ENCODE measurements at regions of chr2 and their contacts with region 1.

Region 1: DNA sequence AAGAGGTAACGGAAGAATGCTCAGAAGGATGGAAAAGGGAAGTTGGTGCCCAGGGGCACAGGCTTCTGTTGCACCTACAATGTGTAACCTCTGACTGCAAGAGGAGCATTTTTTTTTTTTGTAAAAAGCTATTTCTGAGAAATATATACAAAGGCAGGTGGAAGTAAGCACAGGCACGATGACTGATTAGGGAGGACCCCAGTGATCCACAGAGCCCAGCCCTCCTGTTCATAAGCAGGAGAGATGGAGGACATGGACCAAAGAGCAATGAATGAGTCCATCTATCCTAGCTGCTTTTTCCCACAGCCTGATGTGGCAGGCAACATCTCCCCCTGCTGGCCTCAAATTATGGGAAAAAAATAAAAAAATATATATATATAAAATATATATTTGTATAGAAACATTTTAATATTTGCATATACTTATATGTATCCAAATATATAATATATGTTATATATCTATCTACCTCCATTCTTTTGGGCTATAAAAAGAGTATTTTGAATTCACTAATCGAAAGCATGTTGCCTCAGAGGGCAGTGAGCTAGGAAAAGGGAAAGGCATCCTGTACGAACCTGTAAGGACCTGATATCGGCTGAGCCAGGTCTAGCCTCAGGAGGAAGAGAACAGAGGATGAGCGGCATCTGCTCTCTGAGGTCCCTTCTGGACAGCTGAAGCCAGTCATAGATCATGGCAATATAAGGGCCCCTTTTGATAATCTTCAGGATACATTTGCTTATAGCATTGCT is 166.0 kb upstream of the STK17B start:
- DNase-seq: peak; percentile 21 to 29
- ATAC-seq: peak in 1 of 2 experiments; percentile 67; a peak in 3 of 6 replicates
- H3K4me3 ChIP-seq: no peak overlapping the region
- H3K27ac ChIP-seq: no peak overlapping the region
- H3K4me1 ChIP-seq: peaks cover 23% of the 10 kb centered on the region
- CTCF ChIP-seq: peak; percentile 76
- EP300 ChIP-seq: no peak
- POLR2A ChIP-seq: no peak
- RAD21 ChIP-seq: peak; percentile 76 to 84

Region 2: DNA sequence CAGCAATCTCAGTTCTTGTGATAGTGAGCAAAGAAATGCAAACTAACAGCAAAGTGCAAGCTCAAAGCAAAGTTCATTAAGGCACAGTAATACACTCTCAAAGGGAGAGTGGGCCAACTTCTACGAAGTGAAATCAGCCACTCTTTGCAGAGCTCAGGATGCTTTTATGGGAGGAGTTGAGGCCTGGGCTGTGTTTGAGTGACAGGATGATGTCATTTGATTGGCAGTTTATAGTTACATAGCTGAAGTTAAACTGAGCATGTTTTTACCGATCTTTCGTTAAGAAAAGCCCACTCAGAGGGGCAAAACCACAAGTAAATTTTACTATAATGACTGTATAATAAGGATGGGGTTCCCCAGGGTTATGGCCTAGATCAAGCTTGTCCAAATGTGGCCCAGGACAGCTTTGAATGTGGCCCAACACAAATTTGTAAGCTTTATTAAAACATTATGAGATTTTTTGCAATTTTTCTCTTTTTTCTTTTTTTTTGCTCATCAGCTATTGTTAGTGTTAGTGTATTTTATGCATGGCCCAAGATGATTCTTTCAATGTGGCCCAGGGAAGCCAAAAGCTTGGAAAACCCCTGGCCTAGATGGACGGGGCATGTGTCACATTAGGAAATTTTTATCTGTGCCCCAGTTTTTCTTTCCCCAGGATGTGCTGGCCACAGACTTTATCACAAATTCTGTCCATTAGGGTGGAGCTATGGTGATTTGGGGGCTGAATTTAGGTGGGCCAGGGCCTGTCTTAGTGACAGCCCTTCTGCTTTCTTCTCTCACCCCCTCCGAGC is 260.4 kb before region 1 on chr2:
- CTCF ChIA-PET with region 1: interaction called, 73 read pairs
- POLR2A ChIA-PET with region 1: no interaction called
- DNase-seq: no peak
- ATAC-seq: no peak
- H3K4me3 ChIP-seq: no peak overlapping the region
- H3K27ac ChIP-seq: no peak overlapping the region
- H3K4me1 ChIP-seq: no peaks in the 10 kb centered on the region; the same call in 2 of the 3 replicates
- CTCF ChIP-seq: no peak
- EP300 ChIP-seq: no peak
- POLR2A ChIP-seq: no peak
- RAD21 ChIP-seq: no peak

Region 3: DNA sequence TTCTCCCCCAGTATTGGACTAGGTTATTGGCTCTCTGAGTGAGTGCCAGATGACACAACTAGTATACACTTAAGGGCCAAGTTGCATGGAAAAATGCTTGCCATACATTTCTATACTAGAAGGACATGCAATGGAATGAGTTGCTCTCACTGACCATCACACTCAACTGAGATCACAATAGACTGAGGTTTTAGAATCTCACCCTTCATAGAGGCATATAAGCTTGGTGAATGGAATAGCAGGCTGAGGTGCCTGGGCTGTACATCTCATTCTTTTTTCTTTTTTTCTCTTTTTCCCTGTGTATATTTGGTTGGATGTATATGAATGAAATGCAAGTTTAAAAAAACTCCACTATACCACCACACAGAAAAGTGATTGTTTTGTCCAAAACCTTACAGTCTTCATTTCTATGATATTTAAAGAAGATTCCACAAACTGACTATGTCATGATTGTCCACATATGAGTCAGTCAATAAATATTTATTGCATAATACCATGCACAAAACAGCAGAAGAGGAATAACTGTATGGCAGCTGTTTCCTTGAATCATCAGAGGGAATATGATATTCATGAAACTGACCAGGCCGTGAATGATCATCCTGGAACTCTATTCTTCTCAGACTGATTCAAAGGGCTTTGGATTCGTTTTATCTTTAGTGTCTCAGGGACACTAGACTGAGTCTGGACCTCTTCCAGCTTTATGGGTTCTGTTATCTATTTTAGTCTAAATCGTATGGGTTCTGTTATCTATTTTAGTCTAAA is 43.4 kb before region 1 on chr2:
- CTCF ChIA-PET with region 1: interaction called, 19 read pairs
- POLR2A ChIA-PET with region 1: no interaction called
- DNase-seq: peak; percentile 28 to 63
- ATAC-seq: peak; percentile 88 to 90
- H3K4me3 ChIP-seq: no peak overlapping the region
- H3K27ac ChIP-seq: peak overlapping the region; percentile 61 to 74
- H3K4me1 ChIP-seq: peaks cover 28% of the 10 kb centered on the region
- CTCF ChIP-seq: no peak
- EP300 ChIP-seq: peak in 1 of 2 experiments; percentile 55; a peak in 1 of 5 replicates
- POLR2A ChIP-seq: no peak
- RAD21 ChIP-seq: 0 out of 5 replicates have a peak, but pooled peaks of 1 of the 2 experiments have one; percentile 29

Region 4: GRCh38 chr2:196314780-196315179 is 22.6 kb before region 1 on chr2:
- CTCF ChIA-PET with region 1: interaction called, 17 read pairs
- POLR2A ChIA-PET with region 1: no interaction called
- DNase-seq: peak; percentile 37 to 66
- ATAC-seq: peak; percentile 84 to 91
- H3K4me3 ChIP-seq: no peak overlapping the region
- H3K27ac ChIP-seq: peak overlapping the region; percentile 46 to 70
- H3K4me1 ChIP-seq: peaks cover 27% of the 10 kb centered on the region
- CTCF ChIP-seq: no peak
- EP300 ChIP-seq: no peak
- POLR2A ChIP-seq: no peak
- RAD21 ChIP-seq: no peak

Region 5: DNA sequence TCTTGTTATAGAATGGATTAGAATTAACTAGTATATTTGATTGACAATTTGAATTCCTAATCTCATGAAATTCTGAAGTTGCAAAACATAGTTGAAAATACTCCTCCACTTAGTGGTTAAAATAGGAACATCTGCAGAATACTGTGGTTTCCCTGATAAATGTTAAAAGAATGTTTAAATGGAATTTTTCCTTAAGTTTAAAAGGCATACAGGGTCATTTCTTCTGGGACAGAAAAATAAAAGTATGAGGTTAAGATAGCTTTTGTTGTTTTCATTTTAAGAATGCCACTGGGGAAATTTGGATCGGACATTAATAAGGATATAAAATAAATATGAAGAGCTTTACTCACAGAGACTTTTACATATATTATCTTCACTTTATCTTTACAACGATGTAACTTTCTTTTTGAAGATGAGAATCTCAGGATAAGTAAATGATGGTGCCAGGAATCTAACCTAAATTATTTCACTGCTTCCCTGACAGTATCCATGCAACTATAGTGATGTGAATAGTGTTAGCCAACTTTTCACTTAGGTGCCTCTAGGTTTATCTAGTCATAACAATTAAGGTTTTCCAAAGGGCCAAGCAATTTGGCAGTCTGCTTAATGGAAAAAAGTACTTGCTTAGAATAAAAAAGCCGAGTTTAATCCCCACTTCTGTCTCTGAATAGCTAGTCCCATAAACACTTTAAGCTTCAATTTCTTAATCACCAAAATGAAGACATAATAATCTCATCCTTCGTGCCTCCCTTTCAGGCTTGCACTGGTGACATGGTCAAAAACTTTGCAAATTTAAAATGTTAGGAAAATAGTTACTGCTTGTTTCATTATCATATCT is 14.2 kb before region 1 on chr2:
- CTCF ChIA-PET with region 1: interaction called, 15 read pairs
- POLR2A ChIA-PET with region 1: no interaction called
- DNase-seq: no peak
- ATAC-seq: no peak
- H3K4me3 ChIP-seq: no peak overlapping the region
- H3K27ac ChIP-seq: no peak overlapping the region
- H3K4me1 ChIP-seq: 0 out of 3 replicates have a peak, but pooled peaks cover 4% of the 10 kb centered on the region
- CTCF ChIP-seq: no peak
- EP300 ChIP-seq: no peak
- POLR2A ChIP-seq: no peak
- RAD21 ChIP-seq: no peak

Region 6: GRCh38 chr2:196356332-196356731 is 19.0 kb after region 1 on chr2:
- CTCF ChIA-PET with region 1: interaction called, 15 read pairs
- POLR2A ChIA-PET with region 1: no interaction called
- DNase-seq: no peak
- ATAC-seq: no peak
- H3K4me3 ChIP-seq: no peak overlapping the region
- H3K27ac ChIP-seq: no peak overlapping the region
- H3K4me1 ChIP-seq: no peaks in the 10 kb centered on the region
- CTCF ChIP-seq: no peak
- EP300 ChIP-seq: no peak
- POLR2A ChIP-seq: no peak
- RAD21 ChIP-seq: no peak

Region 7: DNA sequence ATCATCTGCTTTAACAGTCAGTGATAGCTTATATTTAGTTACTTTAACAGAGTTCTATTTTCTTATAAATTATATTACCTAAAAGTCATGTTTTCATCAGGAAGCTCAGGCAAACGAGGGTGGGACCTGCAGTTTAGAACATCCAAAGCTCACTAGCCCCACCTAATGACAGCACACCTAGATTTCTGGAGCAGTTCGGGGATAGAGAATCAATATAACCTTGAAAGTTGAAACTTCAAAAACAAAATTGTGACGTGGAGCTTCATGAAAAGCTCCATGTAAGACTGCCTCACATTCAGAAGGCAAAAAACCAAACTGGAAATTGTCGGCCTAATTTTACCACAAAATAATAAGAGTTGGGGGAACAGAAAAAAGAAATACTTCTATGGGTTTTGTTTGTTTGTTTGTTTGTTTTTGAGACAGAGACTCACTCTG is 116.2 kb after region 1 on chr2:
- CTCF ChIA-PET with region 1: interaction called, 25 read pairs
- POLR2A ChIA-PET with region 1: no interaction called
- DNase-seq: peak; percentile 10 to 59
- ATAC-seq: peak; percentile 70 to 85; a peak in 4 of 6 replicates
- H3K4me3 ChIP-seq: no peak overlapping the region
- H3K27ac ChIP-seq: no peak overlapping the region
- H3K4me1 ChIP-seq: no peaks in the 10 kb centered on the region
- CTCF ChIP-seq: peak; percentile 78
- EP300 ChIP-seq: no peak
- POLR2A ChIP-seq: no peak
- RAD21 ChIP-seq: peak; percentile 82 to 84

Measured in A549 (cell line).